ENCODE measurements at regions of chr2 and their contacts with region 1.

Region 1: DNA sequence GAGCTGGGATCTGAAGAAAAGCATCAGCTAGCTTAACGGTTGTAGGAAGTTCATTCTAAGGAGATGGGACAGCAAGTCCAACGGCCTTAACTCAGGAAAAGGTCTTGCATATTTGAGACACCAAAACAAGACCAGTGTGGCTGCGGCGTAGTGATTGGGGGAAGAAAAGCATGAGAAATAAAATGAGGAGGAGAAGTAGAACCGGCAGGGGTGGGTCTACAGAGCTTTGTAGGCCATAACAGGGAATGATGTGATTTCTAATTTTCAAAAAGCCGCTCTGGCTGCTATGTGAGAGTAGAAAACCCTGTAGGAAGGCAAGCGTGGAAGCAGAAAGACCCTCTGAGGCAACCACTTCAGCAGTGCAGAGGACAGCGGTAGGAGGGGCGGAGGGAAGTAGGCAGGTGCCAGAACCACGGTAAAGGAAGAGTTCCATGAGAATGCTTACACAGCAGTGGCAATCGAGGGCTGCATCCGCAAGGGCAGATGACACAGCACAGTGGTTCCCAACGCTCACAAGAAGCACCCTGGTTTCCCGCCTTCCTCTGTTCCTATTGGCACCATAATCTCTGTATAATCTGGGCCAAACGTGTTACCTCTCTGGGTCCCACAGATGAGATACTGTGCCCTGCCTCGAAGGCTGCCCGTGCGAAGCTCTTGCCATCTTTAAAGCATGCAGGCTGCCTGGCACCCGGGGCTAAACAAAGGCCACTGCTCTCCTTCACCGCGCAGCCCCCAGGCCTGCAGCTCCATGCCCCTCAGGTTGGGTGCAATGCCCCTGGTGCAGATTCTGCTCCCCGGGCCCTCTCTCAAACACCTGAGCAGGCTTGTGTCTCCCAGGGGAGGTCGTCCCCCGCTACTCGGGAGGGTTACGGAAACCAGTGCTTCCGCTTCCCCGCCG is 791 bp downstream of the ANKRD39 start:
- DNase-seq: peak; percentile 65
- H3K4me3 Mint-ChIP-seq: peak overlapping the region; percentile 93
- H3K27ac Mint-ChIP-seq: peak overlapping the region; percentile 84
- H3K4me1 Mint-ChIP-seq: peaks cover 42% of the 10 kb centered on the region
- H3K27me3 Mint-ChIP-seq: no peaks in the 10 kb centered on the region

Region 2: GRCh38 chr2:96565111-96565510 is 291.9 kb before region 1 on chr2:
- CTCF ChIA-PET with region 1: no interaction called
- POLR2A ChIA-PET with region 1: no interaction called
- intact Hi-C with region 1: no loop called
- DNase-seq: no peak
- H3K4me3 Mint-ChIP-seq: no peak overlapping the region
- H3K27ac Mint-ChIP-seq: no peak overlapping the region
- H3K4me1 Mint-ChIP-seq: no peaks in the 10 kb centered on the region
- H3K27me3 Mint-ChIP-seq: no peaks in the 10 kb centered on the region

Region 3: GRCh38 chr2:96638144-96639121 is 218.6 kb before region 1 on chr2 and contains the start of gene KANSL3:
- CTCF ChIA-PET with region 1: interaction called, 3 read pairs
- POLR2A ChIA-PET with region 1: interaction called, 11 read pairs
- intact Hi-C with region 1: no loop called
- DNase-seq: peak; percentile 93
- H3K4me3 Mint-ChIP-seq: peak within 1 kb of the TSS; percentile 97
- H3K27ac Mint-ChIP-seq: peak within 1 kb of the TSS; percentile 90
- H3K4me1 Mint-ChIP-seq: peaks cover 28% of the 10 kb centered on the region
- H3K27me3 Mint-ChIP-seq: no peaks in the 10 kb centered on the region
- total RNA-seq, gene KANSL3: 33.7 to 39.4 TPM

Region 4: DNA sequence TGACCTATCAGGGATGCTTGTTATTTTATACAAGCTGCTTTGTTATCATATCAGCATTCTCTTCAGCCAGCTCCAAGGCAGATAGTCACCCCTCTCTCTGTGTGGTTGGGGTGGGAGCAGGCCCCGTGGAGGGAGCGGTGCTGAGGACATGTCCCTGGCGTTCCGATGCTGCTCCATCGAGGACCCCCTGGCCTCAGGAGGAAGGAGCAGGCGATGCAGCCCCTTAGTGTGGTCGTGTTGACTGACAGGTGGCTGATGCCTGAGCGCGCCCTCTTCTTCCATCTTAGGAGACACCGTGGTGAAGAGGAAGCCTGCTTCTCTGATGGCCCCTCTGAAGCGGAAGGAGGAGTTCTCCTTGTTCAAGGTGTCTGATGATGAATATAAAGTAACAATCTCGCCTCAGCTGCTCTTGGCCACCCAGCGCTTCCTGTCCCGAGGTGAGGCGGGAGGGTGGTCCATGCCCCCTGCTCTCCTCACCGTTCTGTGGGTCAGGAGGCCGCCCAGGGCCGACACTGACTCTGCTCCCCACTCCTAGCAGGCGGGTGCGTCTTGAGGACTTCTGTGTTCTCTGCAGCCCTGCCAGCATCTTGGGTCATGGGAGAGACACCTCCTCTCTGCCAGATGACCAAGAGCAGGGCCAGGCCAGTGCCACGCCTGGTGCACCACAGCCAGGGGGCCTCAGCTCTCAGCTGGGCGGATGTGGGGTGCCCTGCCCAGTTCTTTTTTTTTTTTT is 30.3 kb before region 1 on chr2:
- CTCF ChIA-PET with region 1: no interaction called
- POLR2A ChIA-PET with region 1: no interaction called
- intact Hi-C with region 1: no loop called
- DNase-seq: no peak
- H3K4me3 Mint-ChIP-seq: no peak overlapping the region
- H3K27ac Mint-ChIP-seq: no peak overlapping the region
- H3K4me1 Mint-ChIP-seq: peaks cover under 1% of the 10 kb centered on the region
- H3K27me3 Mint-ChIP-seq: no peaks in the 10 kb centered on the region

Region 5: GRCh38 chr2:96839293-96839874 is 17.6 kb before region 1 on chr2:
- CTCF ChIA-PET with region 1: interaction called, 10 read pairs
- POLR2A ChIA-PET with region 1: interaction called, 8 read pairs
- intact Hi-C with region 1: no loop called
- DNase-seq: peak; percentile 90
- H3K4me3 Mint-ChIP-seq: no peak overlapping the region
- H3K27ac Mint-ChIP-seq: peak overlapping the region; percentile 42
- H3K4me1 Mint-ChIP-seq: peaks cover 20% of the 10 kb centered on the region
- H3K27me3 Mint-ChIP-seq: no peaks in the 10 kb centered on the region

Region 6: DNA sequence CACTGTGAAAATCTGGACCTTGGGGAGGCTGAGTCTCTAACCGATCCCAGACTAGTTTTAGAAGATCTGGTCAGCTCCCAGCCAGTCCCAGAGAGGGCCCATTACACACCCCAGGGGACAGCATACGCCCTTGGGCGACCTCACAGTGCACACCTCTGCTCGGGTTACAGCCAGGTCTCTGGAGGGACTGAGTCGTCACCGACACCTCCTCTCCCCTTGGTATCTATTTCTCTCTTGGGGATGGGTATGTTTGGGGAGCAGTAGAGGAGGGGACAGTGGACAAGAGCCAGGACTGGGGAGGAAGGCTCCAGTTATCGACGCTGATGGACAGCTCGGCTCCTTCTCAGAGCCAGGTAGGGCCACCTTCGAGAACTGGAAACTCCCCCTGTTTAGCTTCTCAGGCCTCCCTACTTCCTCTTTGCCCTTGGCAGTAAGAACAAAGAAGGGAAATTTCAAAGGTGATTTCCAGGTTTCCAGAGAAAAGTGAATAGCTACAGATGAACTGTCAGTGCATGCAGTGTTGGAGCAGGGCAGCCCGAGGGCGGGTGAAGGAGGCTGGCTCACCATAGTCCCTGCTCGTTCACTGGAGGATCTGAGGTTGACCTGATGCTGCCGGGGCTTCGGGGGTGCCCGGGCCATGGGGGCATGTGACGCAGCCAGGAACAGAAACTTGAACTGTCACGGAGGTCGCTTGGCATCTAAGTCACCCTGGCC is 17.2 kb after region 1 on chr2:
- CTCF ChIA-PET with region 1: interaction called, 72 read pairs
- POLR2A ChIA-PET with region 1: interaction called, 21 read pairs
- intact Hi-C with region 1: loop called (anchors 2 kb)
- DNase-seq: peak; percentile 51
- H3K4me3 Mint-ChIP-seq: no peak overlapping the region
- H3K27ac Mint-ChIP-seq: peak overlapping the region; percentile 69
- H3K4me1 Mint-ChIP-seq: peaks cover 47% of the 10 kb centered on the region
- H3K27me3 Mint-ChIP-seq: peaks cover 2% of the 10 kb centered on the region

Region 7: DNA sequence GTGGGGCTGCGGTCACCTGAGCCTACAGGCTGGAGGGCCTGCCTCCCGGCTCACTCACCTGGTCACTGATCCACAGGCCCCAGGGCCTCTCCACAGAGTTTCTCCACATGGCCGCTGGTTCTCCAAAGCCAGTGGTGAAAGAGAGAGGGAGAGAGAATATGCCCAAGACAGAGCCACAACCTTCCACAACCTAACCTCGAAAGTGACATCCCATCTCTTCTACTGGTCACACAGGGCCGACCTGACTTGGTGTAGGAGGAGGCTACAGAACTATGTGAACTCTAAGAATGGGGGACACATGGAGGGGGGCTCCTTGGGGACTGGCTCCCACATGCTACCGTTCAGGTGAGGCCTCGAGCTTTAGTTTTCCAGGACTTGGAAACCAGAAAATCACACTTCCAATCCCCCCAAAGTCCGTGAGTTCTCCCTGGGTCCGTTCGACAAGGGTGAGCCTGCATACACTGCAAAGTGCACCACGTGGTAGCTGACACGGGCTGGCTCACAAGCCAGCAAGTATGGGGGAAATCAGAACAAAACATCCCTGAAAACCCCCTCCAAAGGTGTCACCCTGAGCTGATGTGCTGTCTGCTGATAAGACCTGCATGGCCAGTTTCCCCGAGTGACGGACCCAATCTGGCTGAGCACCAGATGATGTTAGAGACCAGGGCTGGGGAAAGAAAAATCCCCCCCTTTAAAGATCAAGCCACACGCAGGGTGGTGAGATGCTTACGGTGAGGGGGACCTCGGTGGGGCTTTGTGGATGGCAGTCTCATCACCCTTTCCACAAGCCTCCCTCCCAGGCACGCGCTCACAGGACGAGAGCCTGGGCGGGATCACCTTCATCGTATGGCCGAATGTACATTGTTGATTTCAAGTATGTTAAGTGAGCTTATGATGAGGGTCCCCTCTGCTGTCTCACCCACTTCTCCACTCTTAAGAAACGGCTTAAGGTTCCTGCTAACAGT is 67.1 kb after region 1 on chr2:
- CTCF ChIA-PET with region 1: interaction called, 12 read pairs
- POLR2A ChIA-PET with region 1: interaction called, 4 read pairs
- intact Hi-C with region 1: no loop called
- DNase-seq: peak; percentile 28
- H3K4me3 Mint-ChIP-seq: peak overlapping the region; percentile 48
- H3K27ac Mint-ChIP-seq: peak overlapping the region; percentile 70
- H3K4me1 Mint-ChIP-seq: peaks cover 24% of the 10 kb centered on the region
- H3K27me3 Mint-ChIP-seq: no peaks in the 10 kb centered on the region

Region 8: DNA sequence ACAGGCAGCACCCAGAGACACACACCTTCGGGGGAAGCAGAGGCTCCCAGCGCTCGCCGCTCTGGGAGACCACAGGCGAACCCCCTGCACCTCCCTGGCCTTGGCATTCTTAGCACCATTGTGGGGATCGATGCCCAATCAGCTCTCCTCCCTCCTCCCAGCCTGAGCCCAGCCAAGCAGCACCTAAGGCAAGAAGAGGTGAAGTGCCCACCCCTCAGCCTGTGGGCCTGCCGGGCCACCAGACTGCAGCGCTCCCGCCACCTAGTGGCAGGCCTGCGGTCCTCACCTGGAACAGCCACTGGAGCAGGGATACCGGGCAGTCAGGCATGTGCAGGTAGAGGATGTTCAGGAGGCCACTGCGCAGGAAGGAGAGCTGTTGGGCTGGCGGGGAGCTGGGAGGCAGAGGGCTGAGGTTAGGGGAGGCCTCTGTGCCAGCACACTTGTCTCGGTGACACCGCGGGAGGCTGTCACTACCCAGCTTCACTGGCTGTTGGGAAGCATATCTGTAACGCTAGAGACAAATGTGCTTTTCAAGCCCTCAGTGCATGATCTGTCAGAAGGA is 94.1 kb after region 1 on chr2:
- CTCF ChIA-PET with region 1: interaction called, 192 read pairs
- POLR2A ChIA-PET with region 1: interaction called, 9 read pairs
- intact Hi-C with region 1: loop called (anchors 1 kb)
- DNase-seq: peak; percentile 83
- H3K4me3 Mint-ChIP-seq: peak overlapping the region; percentile 1
- H3K27ac Mint-ChIP-seq: peak overlapping the region; percentile 58
- H3K4me1 Mint-ChIP-seq: peaks cover 24% of the 10 kb centered on the region
- H3K27me3 Mint-ChIP-seq: no peaks in the 10 kb centered on the region